MCF 10A (cell line): ENCODE measurements at regions of chr3 and their contacts with region 1.

Region 1: DNA sequence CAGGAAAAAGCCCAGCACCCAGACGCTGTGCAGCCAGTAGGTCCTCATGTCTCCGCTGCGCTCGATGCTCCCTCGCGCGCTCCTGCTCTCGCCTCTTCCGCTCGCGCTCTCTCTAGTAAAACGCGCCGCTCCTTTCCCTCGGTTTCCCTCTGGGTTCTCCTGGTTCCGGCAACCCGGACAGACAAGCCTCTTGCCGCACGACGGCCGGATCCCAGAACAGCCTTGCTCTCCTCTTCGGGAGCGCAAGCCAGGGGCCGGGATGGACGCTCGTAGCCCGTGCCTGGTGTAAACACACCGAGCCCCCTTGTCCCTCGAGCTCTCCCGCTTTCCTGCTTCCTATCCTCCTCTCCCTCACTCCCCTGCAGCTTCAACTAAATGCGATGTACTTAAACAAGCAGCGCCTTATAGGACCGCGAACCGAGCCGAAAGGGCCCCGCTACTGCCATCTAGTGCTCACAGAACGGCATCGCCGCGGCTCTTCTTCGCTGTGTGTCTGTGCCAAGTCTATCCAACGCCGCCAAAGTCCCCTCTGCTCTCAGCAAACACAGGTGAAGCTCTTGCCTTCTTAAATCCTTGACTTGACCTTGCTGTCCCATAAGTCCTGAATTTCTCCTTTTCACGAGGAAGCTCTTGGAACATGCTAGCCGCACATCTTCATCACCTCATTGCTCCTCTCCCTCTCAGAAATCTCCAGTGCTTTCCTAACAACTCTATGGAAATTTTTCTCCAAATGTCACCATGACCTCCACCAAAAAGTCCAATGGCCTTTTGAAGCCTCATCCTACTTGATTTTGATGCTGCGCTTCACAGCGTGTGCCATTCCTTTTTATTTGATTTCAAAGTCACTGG is 1037.2 kb downstream of the IGSF11 start:
- DNase-seq: peak; percentile 77
- H3K4me3 Mint-ChIP-seq: no peak overlapping the region
- H3K27ac Mint-ChIP-seq: no peak overlapping the region
- H3K4me1 Mint-ChIP-seq: no peaks in the 10 kb centered on the region
- H3K27me3 Mint-ChIP-seq: no peaks in the 10 kb centered on the region
- CTCF ChIP-seq: peak; percentile 77

Region 2: DNA sequence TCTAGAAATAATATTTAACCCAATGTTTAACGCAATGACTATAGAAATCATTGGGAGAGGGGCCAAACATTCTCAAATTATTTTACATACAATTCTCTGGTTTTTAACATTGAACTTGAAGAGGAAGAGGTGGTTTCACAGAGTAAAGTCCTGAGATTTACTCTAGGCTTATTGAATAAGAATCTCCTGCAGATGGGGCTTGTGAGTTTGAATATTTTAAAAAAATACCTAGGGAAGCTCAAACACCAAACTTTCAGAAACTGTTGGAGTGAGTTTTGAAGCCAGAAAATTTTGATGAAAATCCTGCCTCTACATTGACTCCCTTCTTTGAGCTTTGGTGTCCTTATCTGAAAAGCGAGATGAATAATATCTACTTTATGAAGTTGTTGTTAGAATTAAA is 381.2 kb before region 1 on chr3:
- CTCF ChIA-PET with region 1: no interaction called
- POLR2A ChIA-PET with region 1: no interaction called
- intact Hi-C with region 1: loop called (anchors 10 kb)
- DNase-seq: no peak
- H3K4me3 Mint-ChIP-seq: no peak overlapping the region
- H3K27ac Mint-ChIP-seq: no peak overlapping the region
- H3K4me1 Mint-ChIP-seq: no peaks in the 10 kb centered on the region
- H3K27me3 Mint-ChIP-seq: no peaks in the 10 kb centered on the region
- CTCF ChIP-seq: peak; percentile 11

Region 3: GRCh38 chr3:117962750-117963149 is 34.7 kb before region 1 on chr3:
- CTCF ChIA-PET with region 1: no interaction called
- POLR2A ChIA-PET with region 1: no interaction called
- intact Hi-C with region 1: no loop called
- DNase-seq: no peak
- H3K4me3 Mint-ChIP-seq: no peak overlapping the region
- H3K27ac Mint-ChIP-seq: no peak overlapping the region
- H3K4me1 Mint-ChIP-seq: no peaks in the 10 kb centered on the region
- H3K27me3 Mint-ChIP-seq: no peaks in the 10 kb centered on the region
- CTCF ChIP-seq: no peak

Region 4: GRCh38 chr3:118011910-118012309 is 14.5 kb after region 1 on chr3:
- CTCF ChIA-PET with region 1: interaction called, 10 read pairs
- POLR2A ChIA-PET with region 1: no interaction called
- intact Hi-C with region 1: no loop called
- DNase-seq: no peak
- H3K4me3 Mint-ChIP-seq: no peak overlapping the region
- H3K27ac Mint-ChIP-seq: no peak overlapping the region
- H3K4me1 Mint-ChIP-seq: no peaks in the 10 kb centered on the region
- H3K27me3 Mint-ChIP-seq: no peaks in the 10 kb centered on the region
- CTCF ChIP-seq: no peak

Region 5: DNA sequence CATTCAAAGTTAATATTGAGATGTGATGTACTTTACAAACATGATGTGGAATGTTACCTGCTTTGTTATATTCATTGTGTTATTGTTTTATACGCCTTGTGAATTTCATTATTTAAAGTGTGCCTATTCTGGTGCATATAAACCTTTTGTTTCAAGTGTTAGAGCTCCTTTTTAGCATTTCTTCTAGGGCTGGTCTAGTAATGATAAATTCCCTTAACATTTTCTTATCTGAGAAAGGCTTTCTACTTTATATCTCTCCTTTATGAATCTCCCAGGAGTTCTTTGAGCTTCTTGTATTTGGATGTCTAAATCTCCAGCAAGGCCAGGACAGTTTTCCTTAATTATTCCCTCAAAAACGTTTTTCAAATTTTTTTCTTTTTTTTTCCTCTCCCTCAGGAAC is 31.6 kb after region 1 on chr3:
- CTCF ChIA-PET with region 1: no interaction called
- POLR2A ChIA-PET with region 1: no interaction called
- intact Hi-C with region 1: no loop called
- DNase-seq: no peak
- H3K4me3 Mint-ChIP-seq: no peak overlapping the region
- H3K27ac Mint-ChIP-seq: no peak overlapping the region
- H3K4me1 Mint-ChIP-seq: no peaks in the 10 kb centered on the region
- H3K27me3 Mint-ChIP-seq: no peaks in the 10 kb centered on the region
- CTCF ChIP-seq: no peak